ENCODE measurements at regions of chr18 and their contacts with region 1.

Region 1: DNA sequence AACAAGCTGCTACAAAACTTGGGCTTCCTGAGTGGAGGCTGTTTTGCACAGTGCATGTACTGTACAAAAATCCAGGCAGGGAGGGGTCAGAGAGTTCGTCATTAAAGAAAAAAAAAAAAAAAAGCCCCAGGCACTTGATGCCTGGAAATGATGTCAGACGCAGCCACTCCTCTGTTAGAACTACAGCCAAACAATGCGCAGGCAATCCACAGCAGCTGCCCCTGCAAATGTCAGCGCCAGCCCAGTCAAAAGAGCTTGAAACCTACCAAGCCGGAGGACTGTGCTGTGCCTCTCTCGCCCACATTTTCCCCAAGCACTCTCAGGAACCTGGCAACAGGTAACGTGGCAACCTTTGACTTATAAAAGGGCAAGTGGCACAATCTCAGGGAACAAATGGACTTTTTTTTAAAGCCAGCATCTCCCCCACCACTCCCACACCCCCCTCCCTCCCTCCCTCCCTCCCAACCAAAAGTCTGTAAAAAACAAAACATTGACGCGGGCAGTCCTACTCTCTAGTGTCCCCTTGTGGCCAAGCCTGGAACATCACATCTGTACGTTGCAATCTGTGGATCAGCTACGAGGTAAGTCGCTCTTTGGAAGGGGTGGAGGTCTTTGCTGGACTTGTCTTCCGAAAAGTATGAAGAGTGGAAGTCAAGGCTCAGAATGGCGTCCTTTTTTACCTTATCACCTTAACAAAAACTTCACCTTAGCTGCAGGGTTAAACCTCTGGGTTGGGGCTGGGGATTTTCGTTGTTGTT is 144.1 kb downstream of the TGIF1 start:
- DNase-seq: peak; percentile 93 to 96 (median 95)
- H3K4me3 ChIP-seq: peak overlapping the region; percentile 68 to 72
- H3K4me3 Mint-ChIP-seq: peak overlapping the region; percentile 88 to 95 (median 91)
- H3K27ac ChIP-seq: peak overlapping the region; percentile 91
- H3K27ac Mint-ChIP-seq: peak overlapping the region; percentile 98 to 100 (median 99)
- H3K4me1 ChIP-seq: peaks cover 53% of the 10 kb centered on the region
- H3K4me1 Mint-ChIP-seq: peaks cover 37 to 66% (median 49%) of the 10 kb centered on the region in 4 donors
- H3K27me3 ChIP-seq: no peaks in the 10 kb centered on the region
- H3K27me3 Mint-ChIP-seq: no peaks in the 10 kb centered on the region

Region 2: GRCh38 chr18:3012964-3013804 is 580.9 kb before region 1 on chr18 and contains the start of gene LPIN2:
- CTCF ChIA-PET with region 1: no interaction called
- POLR2A ChIA-PET with region 1: no interaction called
- intact Hi-C with region 1: loop called (anchors 5 kb)
- DNase-seq: peak; percentile 97 to 98 (median 98)
- H3K4me3 ChIP-seq: peak within 1 kb of the TSS; percentile 55 to 70
- H3K4me3 Mint-ChIP-seq: peak within 1 kb of the TSS; percentile 93 to 99 (median 96)
- H3K27ac ChIP-seq: peak within 1 kb of the TSS; percentile 63
- H3K27ac Mint-ChIP-seq: peak within 1 kb of the TSS; percentile 94 to 98 (median 98)
- H3K4me1 ChIP-seq: peaks cover 68% of the 10 kb centered on the region
- H3K4me1 Mint-ChIP-seq: peaks cover 51 to 75% (median 68%) of the 10 kb centered on the region in 4 donors
- H3K27me3 ChIP-seq: no peaks in the 10 kb centered on the region
- H3K27me3 Mint-ChIP-seq: no peaks in the 10 kb centered on the region
- total RNA-seq, gene LPIN2: 95.4 to 103 TPM

Region 3: GRCh38 chr18:3281456-3282400 is 312.4 kb before region 1 on chr18:
- CTCF ChIA-PET with region 1: interaction called, 8 read pairs
- POLR2A ChIA-PET with region 1: interaction called, 10 read pairs
- intact Hi-C with region 1: loop called (anchors 2 kb)
- DNase-seq: peak in 4 of 5 donors; percentile 69 to 73 (median 72)
- H3K4me3 ChIP-seq: no peak overlapping the region
- H3K4me3 Mint-ChIP-seq: no peak overlapping the region
- H3K27ac ChIP-seq: no peak overlapping the region
- H3K27ac Mint-ChIP-seq: no peak overlapping the region
- H3K4me1 ChIP-seq: no peaks in the 10 kb centered on the region
- H3K4me1 Mint-ChIP-seq: peaks cover 0 to 4% (median 1%) of the 10 kb centered on the region in 4 donors
- H3K27me3 ChIP-seq: no peaks in the 10 kb centered on the region
- H3K27me3 Mint-ChIP-seq: no peaks in the 10 kb centered on the region

Region 4: GRCh38 chr18:3441290-3441689 is 152.8 kb before region 1 on chr18:
- CTCF ChIA-PET with region 1: interaction called, 29 read pairs
- POLR2A ChIA-PET with region 1: interaction called, 164 read pairs
- intact Hi-C with region 1: no loop called
- DNase-seq: peak in 3 of 5 donors; percentile 20 to 30 (median 21)
- H3K4me3 ChIP-seq: no peak overlapping the region
- H3K4me3 Mint-ChIP-seq: no peak overlapping the region
- H3K27ac ChIP-seq: no peak overlapping the region
- H3K27ac Mint-ChIP-seq: no peak overlapping the region
- H3K4me1 ChIP-seq: no peaks in the 10 kb centered on the region
- H3K4me1 Mint-ChIP-seq: no peaks in the 10 kb centered on the region
- H3K27me3 ChIP-seq: no peaks in the 10 kb centered on the region
- H3K27me3 Mint-ChIP-seq: peaks cover 0 to 2% of the 10 kb centered on the region in 2 donors

Region 5: GRCh38 chr18:3604498-3605408 is 10.7 kb after region 1 on chr18:
- CTCF ChIA-PET with region 1: interaction called, 52 read pairs
- POLR2A ChIA-PET with region 1: interaction called, 166 read pairs
- intact Hi-C with region 1: loop called (anchors 1 kb)
- DNase-seq: peak; percentile 43 to 63 (median 56)
- H3K4me3 ChIP-seq: peak overlapping the region; percentile 44 to 54
- H3K4me3 Mint-ChIP-seq: no peak overlapping the region
- H3K27ac ChIP-seq: peak overlapping the region; percentile 67
- H3K27ac Mint-ChIP-seq: no peak overlapping the region
- H3K4me1 ChIP-seq: peaks cover 58% of the 10 kb centered on the region
- H3K4me1 Mint-ChIP-seq: peaks cover 8 to 15% (median 11%) of the 10 kb centered on the region in 4 donors
- H3K27me3 ChIP-seq: no peaks in the 10 kb centered on the region
- H3K27me3 Mint-ChIP-seq: no peaks in the 10 kb centered on the region

Measured in CD4-positive, alpha-beta memory T cell (primary cell).